Right ventricle myocardium superior (tissue), 1 donor: ENCODE measurements at regions of chr10 and their contacts with region 1.

Region 1: GRCh38 chr10:114876602-114877300 is 55.2 kb downstream of the FHIP2A start:
- DNase-seq: peak; percentile 74
- ATAC-seq: peak; percentile 90

Region 2: DNA sequence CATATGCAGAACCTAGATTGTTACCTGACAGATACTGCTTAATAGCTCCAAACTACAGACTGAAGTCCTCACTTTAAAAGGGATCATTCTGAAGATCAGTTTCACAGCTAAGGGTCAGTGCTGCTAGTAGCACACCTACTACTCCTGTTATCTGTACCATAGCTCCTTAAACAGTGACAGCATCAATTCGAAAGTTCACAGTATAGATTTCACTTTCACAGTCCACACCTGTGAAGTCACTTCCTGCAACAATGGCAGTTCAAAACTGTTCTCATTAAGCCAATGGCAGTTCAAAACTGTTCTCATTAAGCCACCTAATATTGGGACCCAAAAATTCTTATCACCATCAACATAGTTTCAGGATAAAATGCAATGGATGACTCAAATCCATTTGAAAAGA is 65.8 kb before region 1 on chr10:
- intact Hi-C with region 1: no loop called
- DNase-seq: no peak
- ATAC-seq: no peak

Region 3: GRCh38 chr10:114831186-114831867 is 45.4 kb before region 1 on chr10:
- intact Hi-C with region 1: no loop called
- DNase-seq: no peak
- ATAC-seq: no peak

Region 4: GRCh38 chr10:115129752-115130151 is 253.0 kb after region 1 on chr10:
- intact Hi-C with region 1: loop called (anchors 5 kb)
- DNase-seq: no peak
- ATAC-seq: no peak

Region 5: GRCh38 chr10:115171392-115171960 is 294.7 kb after region 1 on chr10:
- intact Hi-C with region 1: no loop called
- DNase-seq: no peak
- ATAC-seq: no peak